ENCODE measurements at regions of chr20 and their contacts with region 1.

Region 1: GRCh38 chr20:1503564-1504227 is 12.5 kb upstream of the SIRPB2 start:
- DNase-seq: peak; percentile 96
- H3K4me3 ChIP-seq: no peak overlapping the region
- H3K27ac ChIP-seq: no peak overlapping the region
- H3K4me1 ChIP-seq: no peaks in the 10 kb centered on the region
- H3K27me3 ChIP-seq: peaks cover 15 to 30% of the 10 kb centered on the region in 2 experiments
- CTCF ChIP-seq: peak; percentile 98 to 100
- POLR2A ChIP-seq: no peak

Region 2: GRCh38 chr20:1204113-1204512 is 299.6 kb before region 1 on chr20:
- CTCF ChIA-PET with region 1: interaction called, 32 read pairs
- POLR2A ChIA-PET with region 1: no interaction called
- dilution Hi-C with region 1: no loop called
- intact Hi-C with region 1: loop called (anchors 1 kb)
- DNase-seq: no peak
- H3K4me3 ChIP-seq: no peak overlapping the region
- H3K27ac ChIP-seq: no peak overlapping the region
- H3K4me1 ChIP-seq: no peaks in the 10 kb centered on the region
- H3K27me3 ChIP-seq: peaks cover 10 to 21% of the 10 kb centered on the region in 2 experiments
- CTCF ChIP-seq: no peak
- POLR2A ChIP-seq: no peak

Region 3: DNA sequence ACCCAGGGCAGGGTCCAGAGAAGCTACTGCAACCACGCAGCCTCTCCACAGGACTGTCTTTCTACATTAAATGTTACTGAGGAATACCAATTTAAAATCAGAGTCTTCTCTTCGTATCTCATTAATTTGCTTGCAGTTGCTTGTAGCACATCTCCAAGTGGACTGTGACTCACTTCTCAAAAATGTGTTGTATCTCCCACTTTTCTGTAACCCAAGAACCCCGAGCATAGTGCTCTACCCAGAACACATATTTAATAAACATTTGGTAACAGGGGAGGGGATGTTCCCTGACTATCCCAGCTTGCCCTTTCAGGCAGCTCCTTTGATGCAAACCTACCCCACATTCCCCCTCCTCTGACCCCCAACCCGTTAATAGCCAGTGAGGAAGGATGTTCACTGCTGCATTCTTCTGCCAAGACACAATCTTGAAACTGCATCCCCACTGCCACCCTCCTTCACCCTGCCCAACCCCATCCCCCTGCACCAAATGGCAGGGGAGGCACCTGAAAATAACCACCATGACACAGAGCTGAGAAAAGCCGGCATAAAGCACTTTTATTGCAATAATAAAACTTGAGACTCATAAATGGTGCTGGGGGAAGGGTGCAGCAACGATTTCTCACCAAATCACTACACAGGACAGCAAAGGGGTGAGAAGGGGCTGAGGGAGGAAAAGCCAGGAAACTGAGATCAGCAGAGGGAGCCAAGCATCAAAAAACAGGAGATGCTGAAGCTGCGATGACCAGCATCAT is 135.1 kb before region 1 on chr20:
- CTCF ChIA-PET with region 1: no interaction called
- POLR2A ChIA-PET with region 1: no interaction called
- dilution Hi-C with region 1: no loop called
- intact Hi-C with region 1: no loop called
- DNase-seq: no peak
- H3K4me3 ChIP-seq: no peak overlapping the region
- H3K27ac ChIP-seq: no peak overlapping the region
- H3K4me1 ChIP-seq: peaks cover 42% of the 10 kb centered on the region
- H3K27me3 ChIP-seq: no peaks in the 10 kb centered on the region
- CTCF ChIP-seq: no peak
- POLR2A ChIP-seq: peak; percentile 46

Region 4: GRCh38 chr20:1392823-1393506 is 110.7 kb before region 1 on chr20 and contains the start of gene FKBP1A:
- CTCF ChIA-PET with region 1: interaction called, 14 read pairs
- POLR2A ChIA-PET with region 1: no interaction called
- dilution Hi-C with region 1: no loop called
- intact Hi-C with region 1: no loop called
- DNase-seq: peak; percentile 90
- H3K4me3 ChIP-seq: peak within 1 kb of the TSS; percentile 82 to 86 (median 83)
- H3K27ac ChIP-seq: peak within 1 kb of the TSS; percentile 90
- H3K4me1 ChIP-seq: peaks cover 70% of the 10 kb centered on the region
- H3K27me3 ChIP-seq: no peaks in the 10 kb centered on the region
- CTCF ChIP-seq: peak in 1 of 2 donors; percentile 8
- POLR2A ChIP-seq: peak; percentile 92
- total RNA-seq, gene FKBP1A: 968 and 982 TPM in 2 replicates

Region 5: DNA sequence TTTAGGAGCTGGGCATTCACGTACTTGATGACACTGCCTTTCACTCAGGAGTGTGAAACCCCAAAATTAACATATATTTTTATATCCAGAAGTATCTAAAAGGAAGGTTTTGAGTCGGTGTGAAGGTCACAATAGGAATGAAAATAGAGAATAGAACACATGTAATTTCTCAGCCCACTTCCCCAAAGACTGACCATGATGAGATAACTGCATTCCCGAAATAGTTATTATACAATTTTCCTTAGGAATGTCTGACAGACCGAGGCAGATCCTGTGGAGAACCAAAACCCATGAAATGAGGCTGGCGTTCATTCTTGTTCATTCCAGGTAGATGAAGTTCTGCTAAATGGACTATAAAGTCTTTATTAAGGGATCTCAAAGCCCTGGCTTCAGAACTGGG is 47.4 kb before region 1 on chr20:
- CTCF ChIA-PET with region 1: interaction called, 34 read pairs
- POLR2A ChIA-PET with region 1: no interaction called
- dilution Hi-C with region 1: no loop called
- intact Hi-C with region 1: no loop called
- DNase-seq: no peak
- H3K4me3 ChIP-seq: no peak overlapping the region
- H3K27ac ChIP-seq: peak overlapping the region; percentile 15
- H3K4me1 ChIP-seq: no peaks in the 10 kb centered on the region
- H3K27me3 ChIP-seq: no peaks in the 10 kb centered on the region
- CTCF ChIP-seq: no peak
- POLR2A ChIP-seq: no peak

Region 6: DNA sequence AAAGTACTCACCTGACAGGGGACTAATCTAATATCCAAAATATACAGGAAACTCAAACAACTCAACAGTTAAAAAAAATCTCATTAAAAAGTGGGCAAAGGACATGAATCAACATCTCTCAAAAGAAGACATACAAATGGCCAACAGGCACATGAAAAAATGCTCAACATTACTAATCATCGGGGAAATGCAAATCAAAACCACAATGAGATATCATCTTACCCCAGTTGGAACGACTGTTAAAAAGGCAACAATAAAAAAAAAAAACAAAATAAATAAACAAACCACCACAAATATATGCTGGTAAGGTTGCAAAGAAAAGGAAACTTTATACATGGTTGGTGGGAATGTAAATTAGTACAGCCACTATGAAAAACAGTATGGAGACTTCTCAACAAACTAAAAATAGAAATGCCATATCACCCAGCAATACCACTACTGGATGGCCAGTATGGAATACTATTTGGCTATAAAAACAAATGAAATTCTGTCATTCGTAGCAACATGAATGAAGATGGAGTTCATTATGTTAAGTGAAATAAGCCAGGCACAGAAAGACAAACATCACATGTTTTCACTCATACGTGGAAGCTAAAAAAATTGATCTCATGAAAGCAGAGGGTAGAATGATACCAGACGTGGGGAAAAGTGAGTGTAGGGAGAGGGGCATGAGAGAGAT is 19.1 kb before region 1 on chr20:
- CTCF ChIA-PET with region 1: interaction called, 77 read pairs
- POLR2A ChIA-PET with region 1: no interaction called
- dilution Hi-C with region 1: no loop called
- intact Hi-C with region 1: no loop called
- DNase-seq: no peak
- H3K4me3 ChIP-seq: no peak overlapping the region
- H3K27ac ChIP-seq: no peak overlapping the region
- H3K4me1 ChIP-seq: no peaks in the 10 kb centered on the region
- H3K27me3 ChIP-seq: no peaks in the 10 kb centered on the region
- CTCF ChIP-seq: no peak
- POLR2A ChIP-seq: no peak

Region 7: DNA sequence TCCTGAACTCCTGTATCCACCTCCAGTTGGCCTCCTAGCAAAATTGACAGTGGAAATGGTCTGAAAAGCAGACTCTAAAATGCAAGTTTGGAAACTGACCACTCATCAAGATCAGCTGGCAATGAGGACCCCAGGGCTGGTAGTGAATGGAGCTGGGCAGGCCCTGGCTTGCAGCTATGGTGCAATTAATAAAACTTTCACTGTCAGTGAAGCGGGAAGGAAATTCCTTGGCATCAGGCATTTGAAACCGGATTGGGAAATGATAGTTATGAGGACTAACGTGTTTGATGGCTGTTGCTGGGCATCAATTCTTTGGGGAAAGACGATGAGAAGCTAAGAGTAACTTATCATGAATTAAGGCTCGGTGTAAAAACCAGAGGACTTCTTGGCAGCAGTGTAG is 97.0 kb after region 1 on chr20:
- CTCF ChIA-PET with region 1: no interaction called
- POLR2A ChIA-PET with region 1: no interaction called
- dilution Hi-C with region 1: no loop called
- intact Hi-C with region 1: no loop called
- DNase-seq: no peak
- H3K4me3 ChIP-seq: no peak overlapping the region
- H3K27ac ChIP-seq: no peak overlapping the region
- H3K4me1 ChIP-seq: no peaks in the 10 kb centered on the region
- H3K27me3 ChIP-seq: no peaks in the 10 kb centered on the region
- CTCF ChIP-seq: no peak
- POLR2A ChIP-seq: no peak

Region 8: GRCh38 chr20:1631309-1632151 is 127.8 kb after region 1 on chr20:
- CTCF ChIA-PET with region 1: interaction called, 11 read pairs
- POLR2A ChIA-PET with region 1: no interaction called
- dilution Hi-C with region 1: no loop called
- intact Hi-C with region 1: no loop called
- DNase-seq: no peak
- H3K4me3 ChIP-seq: no peak overlapping the region
- H3K27ac ChIP-seq: no peak overlapping the region
- H3K4me1 ChIP-seq: peaks cover 20% of the 10 kb centered on the region
- H3K27me3 ChIP-seq: no peaks in the 10 kb centered on the region
- CTCF ChIP-seq: no peak
- POLR2A ChIP-seq: no peak

Region 9: DNA sequence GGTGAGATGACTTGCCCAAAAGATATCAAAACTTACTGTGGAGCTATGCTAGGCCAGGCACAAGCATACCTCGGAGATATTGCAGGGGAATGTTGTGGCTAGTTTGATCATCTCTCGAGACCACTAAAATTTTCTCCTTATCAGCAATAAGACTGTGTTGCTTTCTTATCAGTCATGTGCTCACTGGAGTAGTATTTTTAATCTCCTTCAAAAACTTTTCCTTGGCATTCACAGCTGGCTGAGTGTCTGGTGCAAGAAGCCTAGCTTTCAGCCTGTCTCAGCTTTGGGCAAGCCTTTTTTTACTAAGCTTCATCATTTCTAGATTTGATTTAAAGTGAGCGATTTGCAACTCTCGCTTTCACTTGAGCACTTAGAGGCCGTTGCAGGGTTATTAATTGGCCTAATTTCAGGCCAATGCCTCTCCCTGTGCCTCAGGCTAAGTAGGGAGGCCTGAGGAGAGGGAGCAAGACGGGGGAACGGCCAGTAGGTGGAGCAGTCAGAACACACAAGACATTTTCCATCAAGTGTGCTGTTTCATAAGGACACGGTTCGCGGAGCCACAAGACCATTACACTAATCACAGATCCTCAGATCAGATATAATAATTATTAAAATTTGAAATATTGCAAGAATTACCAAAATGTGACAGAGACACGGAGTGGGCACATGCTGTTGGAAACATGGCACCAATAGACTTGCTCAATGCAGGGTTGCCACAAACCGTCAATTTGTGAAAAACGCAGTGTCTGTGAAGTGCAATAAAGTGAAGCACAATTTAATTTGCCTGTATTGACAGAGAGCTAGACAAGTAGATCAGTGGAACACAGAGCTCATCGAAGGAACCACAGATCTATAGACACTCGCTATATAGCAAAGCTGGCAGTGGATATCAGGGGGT is 260.7 kb after region 1 on chr20:
- CTCF ChIA-PET with region 1: interaction called, 10 read pairs
- POLR2A ChIA-PET with region 1: no interaction called
- dilution Hi-C with region 1: no loop called
- intact Hi-C with region 1: no loop called
- DNase-seq: peak; percentile 76
- H3K4me3 ChIP-seq: no peak overlapping the region
- H3K27ac ChIP-seq: no peak overlapping the region
- H3K4me1 ChIP-seq: peaks cover 3% of the 10 kb centered on the region
- H3K27me3 ChIP-seq: no peaks in the 10 kb centered on the region
- CTCF ChIP-seq: peak; percentile 84 to 86
- POLR2A ChIP-seq: no peak